ENCODE measurements at regions of chr19 and their contacts with region 1.

Region 1: GRCh38 chr19:51777570-51778462 is 16.8 kb downstream of the FPR2 start:
- DNase-seq: peak; percentile 45
- H3K4me3 Mint-ChIP-seq: no peak overlapping the region
- H3K27ac Mint-ChIP-seq: no peak overlapping the region
- H3K4me1 Mint-ChIP-seq: peaks cover 3% of the 10 kb centered on the region
- H3K27me3 Mint-ChIP-seq: peaks cover 29% of the 10 kb centered on the region

Region 2: DNA sequence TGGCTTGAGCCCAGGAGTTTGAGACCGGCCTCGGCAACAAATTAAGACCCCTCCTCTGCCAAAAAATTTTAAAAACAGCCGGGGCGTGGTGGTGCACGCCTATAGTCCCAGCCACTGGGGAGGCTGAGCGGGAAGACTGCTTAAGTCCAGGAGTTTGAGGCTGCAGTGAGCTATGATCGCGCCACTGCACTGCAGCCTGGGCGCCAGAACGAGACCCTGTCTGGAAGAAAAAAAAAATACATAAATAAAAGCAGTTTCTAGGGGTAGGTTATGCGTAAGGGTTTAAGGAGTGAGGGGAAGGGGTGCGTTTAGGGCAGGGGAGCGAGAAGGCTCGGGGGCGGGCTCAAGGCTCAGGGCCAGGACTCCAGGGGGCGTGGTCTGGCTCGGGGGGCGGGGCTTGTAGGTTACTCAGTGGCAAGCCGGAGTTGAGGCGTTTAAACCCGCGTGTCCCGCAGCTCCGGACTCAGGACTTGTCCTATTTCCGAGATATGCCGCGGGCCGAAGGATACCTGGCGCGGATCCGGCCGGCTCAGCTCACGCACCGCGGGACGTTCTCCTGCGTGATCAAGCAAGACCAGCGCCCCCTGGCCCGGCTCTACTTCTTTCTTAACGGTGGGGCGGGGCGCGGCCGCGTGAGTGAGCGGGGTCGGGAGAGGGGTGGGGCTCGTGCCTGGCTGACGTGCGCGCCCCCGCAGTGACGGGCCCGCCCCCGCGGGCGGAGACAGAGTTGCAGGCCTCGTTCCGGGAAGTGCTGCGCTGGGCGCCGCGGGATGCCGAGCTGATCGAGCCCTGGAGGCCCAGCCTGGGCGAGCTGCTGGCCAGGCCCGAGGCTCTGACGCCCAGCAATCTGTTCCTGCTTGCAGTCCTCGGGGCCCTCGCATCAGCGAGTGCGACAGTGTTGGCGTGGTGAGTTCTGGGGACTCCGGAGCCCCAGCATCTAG is 74.0 kb before region 1 on chr19:
- CTCF ChIA-PET with region 1: interaction called, 14 read pairs
- POLR2A ChIA-PET with region 1: no interaction called
- intact Hi-C with region 1: no loop called
- DNase-seq: peak; percentile 97
- H3K4me3 Mint-ChIP-seq: peak overlapping the region; percentile 92
- H3K27ac Mint-ChIP-seq: peak overlapping the region; percentile 89
- H3K4me1 Mint-ChIP-seq: peaks cover 32% of the 10 kb centered on the region
- H3K27me3 Mint-ChIP-seq: peaks cover 2% of the 10 kb centered on the region

Region 3: DNA sequence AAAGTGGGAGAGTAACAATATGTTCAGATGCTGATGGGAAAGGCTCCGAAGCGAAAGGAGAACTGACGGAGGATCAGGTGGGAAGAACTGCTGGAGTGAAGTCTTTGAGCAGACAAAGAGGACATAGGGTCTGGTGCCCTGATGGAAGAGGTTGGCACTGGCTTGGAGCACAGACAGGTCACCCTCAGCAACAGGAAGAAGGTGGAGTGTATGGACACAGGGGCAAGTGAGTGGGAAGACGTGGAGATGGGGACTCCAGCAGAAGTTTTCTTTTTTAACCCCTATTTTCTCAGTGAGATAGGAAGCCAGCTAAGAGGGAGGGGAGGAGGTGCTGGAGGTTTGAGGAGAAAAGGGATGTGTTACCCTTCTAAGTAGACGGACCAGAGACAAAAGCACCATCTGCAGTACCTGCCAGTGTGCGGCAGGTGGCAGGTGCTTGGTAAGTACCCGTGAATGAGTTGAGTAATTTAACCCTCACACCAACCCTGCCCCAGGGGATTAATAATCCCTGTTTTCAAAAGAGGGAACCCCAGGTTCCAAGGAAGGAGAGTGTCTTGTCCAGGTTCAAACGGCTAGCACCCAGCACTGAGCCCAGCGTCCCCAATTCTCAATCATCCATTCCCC is 65.2 kb before region 1 on chr19:
- CTCF ChIA-PET with region 1: no interaction called
- POLR2A ChIA-PET with region 1: no interaction called
- intact Hi-C with region 1: loop called (anchors 5 kb)
- DNase-seq: peak; percentile 26
- H3K4me3 Mint-ChIP-seq: no peak overlapping the region
- H3K27ac Mint-ChIP-seq: no peak overlapping the region
- H3K4me1 Mint-ChIP-seq: no peaks in the 10 kb centered on the region
- H3K27me3 Mint-ChIP-seq: peaks cover 9% of the 10 kb centered on the region